GM12878 (cell line): ENCODE measurements at regions of chr3 and their contacts with region 1.

Region 1: GRCh38 chr3:179071550-179072397 is at the start of gene ZMAT3:
- DNase-seq: no peak
- ATAC-seq: peak; percentile 73
- H3K4me3 ChIP-seq: peak within 1 kb of the TSS; percentile 70
- H3K27ac ChIP-seq: peak within 1 kb of the TSS; percentile 92
- H3K4me1 ChIP-seq: peaks cover 23% of the 10 kb centered on the region
- H3K27me3 ChIP-seq: no peaks in the 10 kb centered on the region
- CTCF ChIP-seq: no peak
- EP300 ChIP-seq: no peak
- POLR2A ChIP-seq: peak; percentile 93
- RAD21 ChIP-seq: no peak
- polyA plus RNA-seq, gene ZMAT3: 6.2 to 10.4 TPM

Region 2: DNA sequence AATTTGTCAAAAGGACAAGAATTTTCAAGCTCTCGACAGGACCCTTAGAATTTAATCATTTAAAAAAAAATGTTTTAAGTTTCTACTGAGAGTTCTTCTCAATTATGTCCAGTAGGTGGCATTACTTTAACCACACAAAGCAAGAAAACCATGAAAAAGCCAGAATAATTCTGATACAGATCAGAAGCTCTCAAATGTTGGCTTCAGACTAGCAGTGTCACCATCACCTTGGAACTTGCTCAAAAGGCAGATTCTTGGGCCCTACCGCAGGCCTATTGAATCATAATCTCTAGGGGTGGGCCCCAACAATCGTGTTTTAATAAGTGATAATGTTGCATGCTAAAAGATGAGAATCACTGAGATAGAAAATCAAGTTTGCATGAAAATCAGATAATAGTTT is 635.0 kb before region 1 on chr3:
- CTCF ChIA-PET with region 1: interaction called, 3 read pairs
- POLR2A ChIA-PET with region 1: no interaction called
- RAD21 ChIA-PET with region 1: no interaction called
- SMC1A ChIA-PET with region 1: interaction called, 3 read pairs
- in situ Hi-C with region 1: no loop called
- intact Hi-C with region 1: loop called (anchors 10 kb)
- DNase-seq: no peak
- ATAC-seq: peak; percentile 80
- H3K4me3 ChIP-seq: no peak overlapping the region
- H3K27ac ChIP-seq: no peak overlapping the region
- H3K4me1 ChIP-seq: peaks cover 5% of the 10 kb centered on the region
- H3K27me3 ChIP-seq: no peaks in the 10 kb centered on the region
- CTCF ChIP-seq: peak; percentile 28 to 57 (median 51); a peak in 5 of 6 replicates
- EP300 ChIP-seq: no peak
- POLR2A ChIP-seq: no peak
- RAD21 ChIP-seq: peak; percentile 74

Region 3: GRCh38 chr3:179046497-179047353 is 25.0 kb before region 1 on chr3:
- CTCF ChIA-PET with region 1: interaction called, 124 read pairs
- POLR2A ChIA-PET with region 1: interaction called, 138 read pairs
- RAD21 ChIA-PET with region 1: interaction called, 231 read pairs
- SMC1A ChIA-PET with region 1: interaction called, 225 read pairs
- in situ Hi-C with region 1: no loop called
- intact Hi-C with region 1: loop called (anchors 1 kb)
- DNase-seq: peak; percentile 89
- ATAC-seq: peak; percentile 86
- H3K4me3 ChIP-seq: peak overlapping the region; percentile 10; the same call in 1 of the 2 replicates
- H3K27ac ChIP-seq: peak overlapping the region; percentile 84
- H3K4me1 ChIP-seq: peaks cover 22% of the 10 kb centered on the region
- H3K27me3 ChIP-seq: no peaks in the 10 kb centered on the region
- CTCF ChIP-seq: peak; percentile 8 to 30 (median 24); a peak in 1 of 6 replicates
- EP300 ChIP-seq: peak in 1 of 2 experiments; percentile 75; a peak in 2 of 4 replicates
- POLR2A ChIP-seq: peak; percentile 40
- RAD21 ChIP-seq: no peak

Region 4: GRCh38 chr3:179108086-179108485 is 36.3 kb after region 1 on chr3:
- CTCF ChIA-PET with region 1: interaction called, 5 read pairs
- POLR2A ChIA-PET with region 1: no interaction called
- RAD21 ChIA-PET with region 1: interaction called, 6 read pairs
- SMC1A ChIA-PET with region 1: interaction called, 14 read pairs
- in situ Hi-C with region 1: no loop called
- intact Hi-C with region 1: no loop called
- DNase-seq: no peak
- ATAC-seq: no peak
- H3K4me3 ChIP-seq: no peak overlapping the region
- H3K27ac ChIP-seq: no peak overlapping the region
- H3K4me1 ChIP-seq: peaks cover 3% of the 10 kb centered on the region; the same call in 1 of the 2 replicates
- H3K27me3 ChIP-seq: no peaks in the 10 kb centered on the region
- CTCF ChIP-seq: no peak
- EP300 ChIP-seq: no peak
- POLR2A ChIP-seq: no peak
- RAD21 ChIP-seq: no peak

Region 5: GRCh38 chr3:179309225-179310078 is 237.7 kb after region 1 on chr3:
- CTCF ChIA-PET with region 1: interaction called, 114 read pairs
- POLR2A ChIA-PET with region 1: interaction called, 4 read pairs
- RAD21 ChIA-PET with region 1: interaction called, 40 read pairs
- SMC1A ChIA-PET with region 1: interaction called, 42 read pairs
- in situ Hi-C with region 1: no loop called
- intact Hi-C with region 1: no loop called
- DNase-seq: no peak
- ATAC-seq: peak; percentile 95
- H3K4me3 ChIP-seq: no peak overlapping the region
- H3K27ac ChIP-seq: no peak overlapping the region
- H3K4me1 ChIP-seq: peaks cover 4% of the 10 kb centered on the region
- H3K27me3 ChIP-seq: no peaks in the 10 kb centered on the region
- CTCF ChIP-seq: no peak
- EP300 ChIP-seq: no peak
- POLR2A ChIP-seq: no peak
- RAD21 ChIP-seq: no peak

Region 6: GRCh38 chr3:179493260-179493659 is 421.5 kb after region 1 on chr3:
- CTCF ChIA-PET with region 1: no interaction called
- POLR2A ChIA-PET with region 1: no interaction called
- RAD21 ChIA-PET with region 1: no interaction called
- SMC1A ChIA-PET with region 1: no interaction called
- in situ Hi-C with region 1: no loop called
- intact Hi-C with region 1: no loop called
- DNase-seq: no peak
- ATAC-seq: no peak
- H3K4me3 ChIP-seq: no peak overlapping the region
- H3K27ac ChIP-seq: no peak overlapping the region
- H3K4me1 ChIP-seq: no peaks in the 10 kb centered on the region
- H3K27me3 ChIP-seq: no peaks in the 10 kb centered on the region
- CTCF ChIP-seq: no peak
- EP300 ChIP-seq: no peak
- POLR2A ChIP-seq: no peak
- RAD21 ChIP-seq: no peak

Region 7: DNA sequence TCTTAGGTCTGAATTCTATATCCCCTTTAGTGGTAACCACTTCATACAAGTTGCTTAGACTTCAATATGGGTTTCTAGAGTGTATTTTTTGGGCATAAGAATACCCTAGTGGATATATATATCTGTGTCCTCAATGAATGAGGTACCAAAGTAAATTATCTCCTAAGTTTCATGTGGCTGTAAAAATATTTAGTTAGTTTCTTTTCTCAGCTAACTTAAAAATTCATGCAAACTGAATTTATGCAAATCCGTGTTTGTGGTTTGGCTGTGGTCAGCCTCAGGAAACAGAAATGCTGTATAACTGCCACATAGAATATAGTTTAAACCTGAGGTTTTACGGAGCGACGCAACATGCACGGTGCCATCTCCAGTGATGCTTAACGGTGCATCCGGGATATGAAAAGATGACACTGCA is 884.6 kb after region 1 on chr3:
- CTCF ChIA-PET with region 1: no interaction called
- POLR2A ChIA-PET with region 1: no interaction called
- RAD21 ChIA-PET with region 1: no interaction called
- SMC1A ChIA-PET with region 1: no interaction called
- in situ Hi-C with region 1: loop called (anchors 25 kb)
- intact Hi-C with region 1: no loop called
- DNase-seq: peak; percentile 96
- ATAC-seq: peak; percentile 91
- H3K4me3 ChIP-seq: peak overlapping the region; percentile 4; the same call in 1 of the 2 replicates
- H3K27ac ChIP-seq: peak overlapping the region; percentile 70
- H3K4me1 ChIP-seq: peaks cover 27% of the 10 kb centered on the region
- H3K27me3 ChIP-seq: no peaks in the 10 kb centered on the region
- CTCF ChIP-seq: no peak
- EP300 ChIP-seq: peak; percentile 89 to 98
- POLR2A ChIP-seq: no peak
- RAD21 ChIP-seq: no peak